CD8-positive, alpha-beta T cell (primary cell): ENCODE measurements at regions of chr19 and their contacts with region 1.

Region 1: GRCh38 chr19:18152444-18152816 is 533 bp upstream of the PIK3R2 start:
- DNase-seq: peak; percentile 94 to 99 (median 99)
- ATAC-seq: peak; percentile 65
- H3K4me3 ChIP-seq: peak overlapping the region; percentile 66 to 71
- H3K4me3 Mint-ChIP-seq: peak overlapping the region; percentile 84
- H3K27ac ChIP-seq: peak overlapping the region; percentile 66 to 87
- H3K27ac Mint-ChIP-seq: peak overlapping the region; percentile 95
- H3K4me1 ChIP-seq: peaks cover 17% of the 10 kb centered on the region
- H3K4me1 Mint-ChIP-seq: peaks cover 23% of the 10 kb centered on the region
- H3K27me3 ChIP-seq: no peaks in the 10 kb centered on the region
- H3K27me3 Mint-ChIP-seq: no peaks in the 10 kb centered on the region
- CTCF ChIP-seq: peak; percentile 87

Region 2: GRCh38 chr19:17747205-17748098 is 405.0 kb before region 1 on chr19:
- CTCF ChIA-PET with region 1: no interaction called
- POLR2A ChIA-PET with region 1: no interaction called
- intact Hi-C with region 1: loop called in 1 of 2 experiments (anchors 2 kb)
- DNase-seq: peak; percentile 85 to 98 (median 93)
- ATAC-seq: peak; percentile 87
- H3K4me3 ChIP-seq: peak overlapping the region; percentile 57 to 63
- H3K4me3 Mint-ChIP-seq: peak overlapping the region; percentile 89
- H3K27ac ChIP-seq: peak overlapping the region in 1 of 2 experiments; percentile 46
- H3K27ac Mint-ChIP-seq: peak overlapping the region; percentile 45
- H3K4me1 ChIP-seq: peaks cover 50% of the 10 kb centered on the region
- H3K4me1 Mint-ChIP-seq: peaks cover 46% of the 10 kb centered on the region
- H3K27me3 ChIP-seq: no peaks in the 10 kb centered on the region
- H3K27me3 Mint-ChIP-seq: no peaks in the 10 kb centered on the region
- CTCF ChIP-seq: no peak

Region 3: GRCh38 chr19:18000935-18001778 is 151.3 kb before region 1 on chr19:
- CTCF ChIA-PET with region 1: interaction called, 3 read pairs
- POLR2A ChIA-PET with region 1: interaction called, 5 read pairs
- intact Hi-C with region 1: loop called in 1 of 2 experiments (anchors 2 kb)
- DNase-seq: peak; percentile 90 to 99 (median 96)
- ATAC-seq: peak; percentile 81
- H3K4me3 ChIP-seq: peak overlapping the region; percentile 65 to 69
- H3K4me3 Mint-ChIP-seq: peak overlapping the region; percentile 92
- H3K27ac ChIP-seq: peak overlapping the region; percentile 94
- H3K27ac Mint-ChIP-seq: peak overlapping the region; percentile 98
- H3K4me1 ChIP-seq: peaks cover 29% of the 10 kb centered on the region
- H3K4me1 Mint-ChIP-seq: peaks cover 32% of the 10 kb centered on the region
- H3K27me3 ChIP-seq: no peaks in the 10 kb centered on the region
- H3K27me3 Mint-ChIP-seq: no peaks in the 10 kb centered on the region
- CTCF ChIP-seq: no peak

Region 4: DNA sequence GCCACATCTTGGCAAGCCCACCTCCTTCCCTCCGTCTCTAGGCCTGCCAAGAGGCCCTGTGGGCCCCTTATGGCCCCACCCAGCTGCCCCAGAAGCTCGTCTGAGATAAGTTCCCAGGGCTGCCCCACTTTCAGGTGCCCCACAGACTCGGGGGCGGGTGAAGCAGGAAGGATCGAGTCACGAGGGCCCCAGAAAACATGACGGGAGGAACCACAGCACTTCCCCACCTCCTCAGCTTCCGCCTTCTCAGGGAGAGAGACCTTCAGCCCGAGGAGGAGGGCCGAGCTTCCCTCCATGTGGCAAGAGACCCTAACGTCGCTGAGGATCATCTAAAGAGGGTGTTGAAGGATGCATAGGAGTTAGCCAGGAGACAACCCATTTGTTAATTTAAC is 61.2 kb before region 1 on chr19:
- CTCF ChIA-PET with region 1: interaction called, 3 read pairs
- POLR2A ChIA-PET with region 1: interaction called, 10 read pairs
- intact Hi-C with region 1: loop called in 1 of 2 experiments (anchors 2 kb)
- DNase-seq: peak; percentile 54 to 94 (median 82)
- ATAC-seq: peak; percentile 61
- H3K4me3 ChIP-seq: peak overlapping the region in 1 of 2 experiments; percentile 3
- H3K4me3 Mint-ChIP-seq: peak overlapping the region; percentile 56
- H3K27ac ChIP-seq: peak overlapping the region; percentile 54 to 97
- H3K27ac Mint-ChIP-seq: peak overlapping the region; percentile 97
- H3K4me1 ChIP-seq: peaks cover 68% of the 10 kb centered on the region
- H3K4me1 Mint-ChIP-seq: peaks cover 68% of the 10 kb centered on the region
- H3K27me3 ChIP-seq: no peaks in the 10 kb centered on the region
- H3K27me3 Mint-ChIP-seq: no peaks in the 10 kb centered on the region
- CTCF ChIP-seq: no peak

Region 5: GRCh38 chr19:18109733-18110595 is 42.5 kb before region 1 on chr19:
- CTCF ChIA-PET with region 1: interaction called, 20 read pairs
- POLR2A ChIA-PET with region 1: interaction called, 8 read pairs
- intact Hi-C with region 1: loop called in 1 of 2 experiments (anchors 1 kb)
- DNase-seq: peak in 6 of 9 experiments; percentile 48 to 72 (median 58)
- ATAC-seq: peak; percentile 79
- H3K4me3 ChIP-seq: peak overlapping the region; percentile 74
- H3K4me3 Mint-ChIP-seq: peak overlapping the region; percentile 82
- H3K27ac ChIP-seq: peak overlapping the region; percentile 41 to 53
- H3K27ac Mint-ChIP-seq: peak overlapping the region; percentile 86
- H3K4me1 ChIP-seq: peaks cover 21% of the 10 kb centered on the region
- H3K4me1 Mint-ChIP-seq: peaks cover 18% of the 10 kb centered on the region
- H3K27me3 ChIP-seq: no peaks in the 10 kb centered on the region
- H3K27me3 Mint-ChIP-seq: no peaks in the 10 kb centered on the region
- CTCF ChIP-seq: no peak

Region 6: GRCh38 chr19:18179957-18180356 is 27.5 kb after region 1 on chr19:
- CTCF ChIA-PET with region 1: no interaction called
- POLR2A ChIA-PET with region 1: no interaction called
- intact Hi-C with region 1: no loop called
- DNase-seq: no peak
- ATAC-seq: no peak
- H3K4me3 ChIP-seq: no peak overlapping the region
- H3K4me3 Mint-ChIP-seq: no peak overlapping the region
- H3K27ac ChIP-seq: no peak overlapping the region
- H3K27ac Mint-ChIP-seq: no peak overlapping the region
- H3K4me1 ChIP-seq: no peaks in the 10 kb centered on the region
- H3K4me1 Mint-ChIP-seq: no peaks in the 10 kb centered on the region
- H3K27me3 ChIP-seq: peaks cover 0 to 4% of the 10 kb centered on the region in 2 experiments
- H3K27me3 Mint-ChIP-seq: no peaks in the 10 kb centered on the region
- CTCF ChIP-seq: no peak

Region 7: DNA sequence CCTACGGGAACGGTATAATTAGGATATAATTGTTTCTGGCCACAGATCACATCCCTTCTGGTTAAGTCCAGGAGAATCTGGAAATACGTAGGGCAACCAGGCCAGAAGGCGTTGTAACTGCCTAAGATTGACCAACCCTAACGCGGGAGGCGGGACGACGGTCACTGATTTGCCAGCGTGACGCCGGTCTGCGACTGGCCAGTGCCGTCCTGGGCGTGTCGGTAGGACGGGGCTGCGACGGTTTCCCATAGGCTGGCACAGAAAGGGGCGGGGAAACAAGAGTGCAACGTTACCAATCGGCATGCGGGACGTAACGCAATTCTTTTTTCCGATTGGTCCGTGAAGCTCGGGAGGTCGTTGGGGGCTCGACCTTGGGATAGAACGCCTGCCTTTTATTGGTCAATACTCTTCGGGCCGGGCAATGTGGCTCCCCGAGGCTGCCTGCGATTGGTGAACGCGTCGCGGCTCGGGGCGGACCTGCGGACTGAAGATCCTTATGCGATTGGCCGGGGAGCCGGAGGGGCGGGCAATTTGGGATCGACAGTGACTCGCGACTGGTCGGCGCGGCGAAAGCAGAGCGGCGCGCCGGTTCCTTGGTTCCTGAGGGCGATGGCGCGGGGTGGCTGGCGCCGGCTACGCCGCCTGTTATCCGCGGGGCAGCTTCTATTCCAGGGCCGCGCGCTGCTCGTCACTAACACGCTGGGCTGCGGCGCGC is 40.4 kb after region 1 on chr19 and contains the start of gene MPV17L2:
- CTCF ChIA-PET with region 1: interaction called, 3 read pairs
- POLR2A ChIA-PET with region 1: interaction called, 5 read pairs
- intact Hi-C with region 1: loop called (anchors 2 kb)
- DNase-seq: peak; percentile 95 to 100 (median 97)
- ATAC-seq: peak; percentile 84
- H3K4me3 ChIP-seq: peak within 1 kb of the TSS; percentile 73
- H3K4me3 Mint-ChIP-seq: peak within 1 kb of the TSS; percentile 87
- H3K27ac ChIP-seq: peak within 1 kb of the TSS; percentile 64 to 82
- H3K27ac Mint-ChIP-seq: peak within 1 kb of the TSS; percentile 90
- H3K4me1 ChIP-seq: peaks cover 18% of the 10 kb centered on the region
- H3K4me1 Mint-ChIP-seq: peaks cover 22% of the 10 kb centered on the region
- H3K27me3 ChIP-seq: no peaks in the 10 kb centered on the region
- H3K27me3 Mint-ChIP-seq: no peaks in the 10 kb centered on the region
- CTCF ChIP-seq: no peak
- total RNA-seq, gene MPV17L2: 4.0 to 5.2 TPM